GM10248 (cell line): ENCODE measurements at regions of chr3 and their contacts with region 1.

Region 1: GRCh38 chr3:58299839-58300516 is 6.1 kb upstream of the RPP14 start:
- DNase-seq: peak; percentile 39
- CTCF ChIP-seq: peak; percentile 44

Region 2: DNA sequence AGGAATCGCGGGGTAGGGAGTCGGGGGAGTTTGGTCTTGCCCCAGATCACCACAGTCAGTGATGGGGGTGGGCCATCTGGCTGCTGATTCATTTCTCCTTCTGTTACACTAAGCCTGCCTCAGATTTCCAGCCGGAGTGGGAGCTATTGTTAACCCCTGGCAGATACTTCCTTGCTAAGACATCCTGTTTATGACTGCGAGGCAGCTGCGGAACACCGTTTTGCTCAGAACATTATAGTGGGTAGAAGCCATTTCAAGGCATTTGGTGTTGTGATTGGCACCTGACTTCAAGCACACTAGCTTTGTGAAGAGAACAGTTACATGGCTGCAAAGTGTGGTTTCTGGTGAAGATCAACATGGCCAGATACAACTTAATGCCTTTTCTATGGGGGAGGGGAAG is 217.9 kb before region 1 on chr3:
- CTCF ChIA-PET with region 1: no interaction called
- POLR2A ChIA-PET with region 1: no interaction called
- DNase-seq: no peak
- CTCF ChIP-seq: no peak

Region 3: DNA sequence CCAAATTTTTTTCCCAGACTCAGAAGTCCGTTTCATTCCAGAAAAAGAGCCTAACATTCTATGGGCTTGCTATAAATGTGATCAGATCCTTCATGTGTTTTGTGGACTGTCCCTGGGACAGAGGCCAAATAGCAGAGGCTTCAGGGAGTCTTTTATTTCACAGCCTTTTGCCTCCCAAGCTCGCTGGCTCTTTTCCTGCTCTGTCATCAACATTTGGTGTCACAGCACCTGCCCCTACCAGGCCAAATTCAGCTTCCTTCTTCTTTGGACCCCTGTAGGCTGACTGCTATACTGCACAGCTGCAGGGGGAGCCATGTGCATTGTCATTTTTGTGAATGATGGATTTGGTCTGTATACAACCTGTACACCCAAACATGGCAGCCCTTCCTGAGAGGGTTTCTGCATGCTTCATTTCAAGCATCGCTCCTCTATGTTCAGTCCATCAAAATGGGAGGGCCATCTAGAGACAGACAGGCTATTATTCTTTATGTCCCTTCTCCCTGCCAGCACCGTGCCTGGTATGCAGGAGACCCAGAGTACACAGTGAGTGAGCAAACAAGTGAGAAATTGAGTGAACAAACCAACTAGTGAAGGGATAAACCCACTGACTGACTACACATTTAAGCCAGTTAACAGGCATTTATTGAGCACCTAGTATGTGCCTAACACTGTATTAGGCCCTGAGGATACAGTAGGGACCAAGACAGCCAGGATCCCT is 11.8 kb before region 1 on chr3:
- CTCF ChIA-PET with region 1: interaction called, 17 read pairs
- POLR2A ChIA-PET with region 1: no interaction called
- DNase-seq: no peak
- CTCF ChIP-seq: no peak